Endothelial cell of umbilical vein (primary cell): ENCODE measurements at regions of chr10 and their contacts with region 1.

Region 1: GRCh38 chr10:47354162-47354561 is 6.0 kb downstream of the RBP3 start:
- DNase-seq: no peak
- H3K4me3 ChIP-seq: no peak overlapping the region
- H3K27ac ChIP-seq: no peak overlapping the region
- H3K4me1 ChIP-seq: no peaks in the 10 kb centered on the region
- H3K27me3 ChIP-seq: no peaks in the 10 kb centered on the region
- CTCF ChIP-seq: peak in 1 of 2 donors; percentile 2
- POLR2A ChIP-seq: no peak

Region 2: GRCh38 chr10:47152861-47153349 is 201.3 kb before region 1 on chr10:
- CTCF ChIA-PET with region 1: no interaction called
- POLR2A ChIA-PET with region 1: no interaction called
- dilution Hi-C with region 1: no loop called
- intact Hi-C with region 1: no loop called
- DNase-seq: peak; percentile 8
- H3K4me3 ChIP-seq: no peak overlapping the region
- H3K27ac ChIP-seq: no peak overlapping the region
- H3K4me1 ChIP-seq: no peaks in the 10 kb centered on the region
- H3K27me3 ChIP-seq: no peaks in the 10 kb centered on the region
- CTCF ChIP-seq: peak; percentile 1 to 12
- POLR2A ChIP-seq: no peak

Region 3: DNA sequence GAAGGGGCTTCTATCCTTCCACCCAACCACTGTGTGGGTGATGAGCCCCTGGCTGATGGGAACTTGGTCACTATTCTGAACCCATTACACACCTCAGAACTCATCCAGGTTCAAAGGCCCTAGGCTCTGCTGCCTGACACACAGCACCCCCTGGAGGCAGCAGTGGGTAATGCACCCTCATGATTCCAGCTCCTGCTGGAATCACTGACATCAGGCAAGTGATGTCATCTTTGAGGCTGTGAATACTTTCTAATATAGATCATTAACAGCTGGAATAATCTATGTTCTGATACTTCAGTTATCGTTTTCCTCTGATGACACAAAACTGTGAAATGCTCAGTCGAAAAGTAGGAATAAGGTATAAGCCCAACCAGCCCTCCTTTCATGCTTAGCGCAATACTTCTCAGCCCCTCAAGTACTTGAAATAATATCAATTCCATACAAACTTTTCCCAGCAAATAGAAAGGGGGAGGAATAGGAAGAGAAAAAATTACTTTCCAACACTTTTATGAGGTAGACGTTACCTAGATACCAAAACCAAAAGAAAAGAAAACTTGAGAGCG is 13.5 kb before region 1 on chr10:
- CTCF ChIA-PET with region 1: interaction called, 14 read pairs
- POLR2A ChIA-PET with region 1: no interaction called
- dilution Hi-C with region 1: no loop called
- intact Hi-C with region 1: no loop called
- DNase-seq: peak; percentile 64
- H3K4me3 ChIP-seq: no peak overlapping the region
- H3K27ac ChIP-seq: no peak overlapping the region
- H3K4me1 ChIP-seq: no peaks in the 10 kb centered on the region
- H3K27me3 ChIP-seq: peaks cover 0 to 8% of the 10 kb centered on the region in 2 experiments
- CTCF ChIP-seq: peak; percentile 91 to 97
- POLR2A ChIP-seq: no peak

Region 4: GRCh38 chr10:47366731-47367460 is 12.7 kb after region 1 on chr10:
- CTCF ChIA-PET with region 1: interaction called, 5 read pairs
- POLR2A ChIA-PET with region 1: no interaction called
- dilution Hi-C with region 1: no loop called
- intact Hi-C with region 1: loop called (anchors 1 kb)
- DNase-seq: no peak
- H3K4me3 ChIP-seq: no peak overlapping the region
- H3K27ac ChIP-seq: no peak overlapping the region
- H3K4me1 ChIP-seq: no peaks in the 10 kb centered on the region
- H3K27me3 ChIP-seq: no peaks in the 10 kb centered on the region
- CTCF ChIP-seq: no peak
- POLR2A ChIP-seq: no peak

Region 5: GRCh38 chr10:47381427-47382379 is 27.5 kb after region 1 on chr10:
- CTCF ChIA-PET with region 1: no interaction called
- POLR2A ChIA-PET with region 1: no interaction called
- dilution Hi-C with region 1: no loop called
- intact Hi-C with region 1: no loop called
- DNase-seq: no peak
- H3K4me3 ChIP-seq: no peak overlapping the region
- H3K27ac ChIP-seq: no peak overlapping the region
- H3K4me1 ChIP-seq: peaks cover 3% of the 10 kb centered on the region
- H3K27me3 ChIP-seq: peaks cover 17 to 28% of the 10 kb centered on the region in 2 experiments
- CTCF ChIP-seq: no peak
- POLR2A ChIP-seq: no peak